Spleen (tissue), 13 donors: ENCODE measurements at regions of chr6 and their contacts with region 1.

Region 1: GRCh38 chr6:51855310-51856082 is 231.9 kb downstream of the PKHD1 start:
- DNase-seq: no peak
- H3K4me3 ChIP-seq: no peak overlapping the region
- H3K27ac ChIP-seq: no peak overlapping the region
- H3K4me1 ChIP-seq: no peaks in the 10 kb centered on the region
- H3K27me3 ChIP-seq: peaks cover 0 to 11% (median 0%) of the 10 kb centered on the region in 7 donors
- CTCF ChIP-seq: peak in 9 of 11 experiments; percentile 26 to 72 (median 63)
- POLR2A ChIP-seq: no peak

Region 2: DNA sequence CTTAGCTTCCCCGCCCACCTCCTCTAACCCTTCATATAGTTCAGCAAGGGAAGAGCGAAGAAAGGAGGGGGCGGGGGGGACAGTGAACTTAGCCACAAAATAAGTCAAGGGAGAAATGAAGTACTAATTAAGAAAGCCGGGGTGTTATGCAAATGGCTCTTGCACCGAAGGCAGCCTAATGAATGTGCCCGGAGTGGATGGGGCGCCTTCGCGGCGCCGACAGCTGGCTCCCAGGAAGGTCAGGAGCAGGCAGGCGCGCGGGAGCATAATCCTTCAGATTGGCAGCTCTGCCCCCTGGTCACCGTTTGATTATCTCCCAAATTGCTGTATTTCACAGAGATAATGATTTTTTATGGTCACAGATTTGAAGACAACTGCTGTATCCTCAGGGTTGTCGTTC is 641.7 kb before region 1 on chr6:
- intact Hi-C with region 1: no loop called
- DNase-seq: peak; percentile 56
- H3K4me3 ChIP-seq: peak overlapping the region in 1 of 8 donors; percentile 22
- H3K27ac ChIP-seq: no peak overlapping the region
- H3K4me1 ChIP-seq: no peaks in the 10 kb centered on the region
- H3K27me3 ChIP-seq: peaks cover 0 to 7% (median 0%) of the 10 kb centered on the region in 7 donors
- CTCF ChIP-seq: no peak
- POLR2A ChIP-seq: no peak

Region 3: DNA sequence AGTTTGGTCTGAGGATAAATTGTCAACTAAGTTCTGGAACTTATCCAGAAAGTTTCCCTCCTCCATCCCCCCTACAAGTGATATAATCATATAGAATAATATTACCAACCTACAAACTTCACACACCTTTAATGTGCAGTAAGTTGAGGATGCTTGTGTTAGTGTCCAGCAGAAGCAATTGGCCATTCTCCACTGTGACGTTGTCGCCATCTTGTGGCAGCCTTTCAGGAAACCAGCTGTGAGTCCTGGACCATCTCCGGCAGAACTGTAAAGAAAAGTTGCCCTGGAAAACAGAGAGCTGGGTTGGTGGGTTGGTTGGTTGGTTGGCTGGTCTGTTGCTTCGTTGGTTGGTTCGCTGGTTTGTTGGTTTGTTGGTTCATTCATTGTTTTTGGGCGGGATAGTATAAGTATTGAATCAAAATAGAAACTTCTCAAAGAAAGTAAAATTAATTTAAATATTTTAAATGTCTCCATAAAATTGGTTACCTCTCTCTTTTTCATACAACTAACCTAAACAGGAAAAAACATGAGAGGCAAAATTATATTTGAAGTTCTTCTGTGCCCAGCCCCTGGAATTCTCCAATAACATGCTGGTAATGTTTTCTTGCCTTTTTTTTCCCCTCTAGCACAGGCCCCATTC is 104.4 kb after region 1 on chr6:
- intact Hi-C with region 1: loop called (anchors 10 kb)
- DNase-seq: no peak
- H3K4me3 ChIP-seq: no peak overlapping the region
- H3K27ac ChIP-seq: no peak overlapping the region
- H3K4me1 ChIP-seq: no peaks in the 10 kb centered on the region
- H3K27me3 ChIP-seq: peaks cover 0 to 12% (median 0%) of the 10 kb centered on the region in 7 donors
- CTCF ChIP-seq: peak in 10 of 11 experiments; percentile 27 to 60 (median 51)
- POLR2A ChIP-seq: no peak

Region 4: DNA sequence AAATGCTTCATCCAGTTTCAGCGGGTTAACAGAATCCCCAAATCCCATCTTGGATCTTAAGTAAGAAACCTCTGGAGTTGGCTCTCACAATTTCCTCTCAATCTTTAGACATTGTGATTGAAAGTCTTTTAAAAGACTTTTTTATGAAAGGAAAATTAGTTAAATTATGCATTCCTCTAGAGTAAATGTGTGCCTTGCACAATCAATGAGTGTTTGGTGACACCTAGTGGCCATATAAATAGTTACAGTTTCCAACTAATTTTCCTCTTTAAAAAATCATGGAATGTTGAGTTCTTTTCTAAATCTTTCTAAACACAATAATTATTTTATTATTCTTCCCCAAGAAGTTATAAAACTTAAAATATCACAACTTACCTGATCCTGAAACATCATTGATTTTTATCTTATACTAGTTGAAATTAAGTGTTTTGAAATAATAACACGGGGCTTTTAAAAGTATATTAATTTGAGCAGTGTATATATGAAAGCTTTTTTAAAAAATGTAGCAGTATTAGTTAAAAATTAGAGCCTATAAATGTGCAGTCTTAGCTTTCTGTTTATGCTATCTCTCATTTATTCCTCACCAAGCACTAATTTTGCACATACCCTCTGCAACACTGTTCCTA is 165.6 kb after region 1 on chr6:
- intact Hi-C with region 1: loop called (anchors 10 kb)
- DNase-seq: no peak
- H3K4me3 ChIP-seq: no peak overlapping the region
- H3K27ac ChIP-seq: no peak overlapping the region
- H3K4me1 ChIP-seq: no peaks in the 10 kb centered on the region
- H3K27me3 ChIP-seq: peaks cover 0 to 10% (median 0%) of the 10 kb centered on the region in 7 donors
- CTCF ChIP-seq: peak in 10 of 11 experiments; percentile 30 to 74 (median 62)
- POLR2A ChIP-seq: no peak